Transverse colon (tissue), 4 donors: ENCODE measurements at regions of chr20 and their contacts with region 1.

Region 1: GRCh38 chr20:22480336-22480735 is 104.0 kb downstream of the FOXA2 start:
- DNase-seq: no peak
- H3K4me3 ChIP-seq: no peak overlapping the region
- H3K27ac ChIP-seq: no peak overlapping the region
- H3K4me1 ChIP-seq: peaks cover 0 to 12% (median 2%) of the 10 kb centered on the region in 4 donors
- H3K27me3 ChIP-seq: no peaks in the 10 kb centered on the region
- CTCF ChIP-seq: no peak
- EP300 ChIP-seq: no peak
- POLR2A ChIP-seq: no peak

Region 2: DNA sequence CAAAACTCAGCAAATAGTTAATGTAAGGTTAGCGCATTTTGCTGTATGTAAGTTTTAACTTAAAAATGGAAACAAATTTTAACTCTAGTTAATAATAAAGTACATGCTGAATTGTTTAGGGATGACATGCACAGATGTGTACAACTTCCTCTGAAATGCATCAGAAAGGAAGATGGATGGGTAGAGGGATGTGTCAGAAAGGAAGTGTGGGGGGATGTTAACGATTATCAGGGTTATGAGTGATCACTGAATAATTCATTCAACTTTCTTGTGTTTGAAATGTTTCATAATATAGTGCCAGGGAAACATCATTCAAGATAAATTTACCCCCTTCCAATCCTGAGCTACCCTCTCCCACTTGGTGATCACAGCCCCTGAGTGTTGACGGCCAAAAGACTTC is 16.5 kb after region 1 on chr20:
- in situ Hi-C with region 1: no loop called
- intact Hi-C with region 1: loop called (anchors 1 kb)
- DNase-seq: no peak
- H3K4me3 ChIP-seq: no peak overlapping the region
- H3K27ac ChIP-seq: no peak overlapping the region
- H3K4me1 ChIP-seq: peaks cover 0 to 5% (median 0%) of the 10 kb centered on the region in 4 donors
- H3K27me3 ChIP-seq: no peaks in the 10 kb centered on the region
- CTCF ChIP-seq: no peak
- EP300 ChIP-seq: no peak
- POLR2A ChIP-seq: no peak